ENCODE measurements at regions of chr2 and their contacts with region 1.

Region 1: GRCh38 chr2:134341476-134341875 is 87.6 kb downstream of the MGAT5 start:
- DNase-seq: no peak
- ATAC-seq: no peak
- H3K4me3 ChIP-seq: no peak overlapping the region
- H3K4me3 Mint-ChIP-seq: no peak overlapping the region
- H3K27ac ChIP-seq: peak overlapping the region in 1 of 2 donors; percentile 55
- H3K27ac Mint-ChIP-seq: no peak overlapping the region
- H3K4me1 ChIP-seq: peaks cover 4 to 11% of the 10 kb centered on the region in 2 donors
- H3K4me1 Mint-ChIP-seq: peaks cover 53% of the 10 kb centered on the region
- H3K27me3 ChIP-seq: no peaks in the 10 kb centered on the region
- H3K27me3 Mint-ChIP-seq: no peaks in the 10 kb centered on the region
- CTCF ChIP-seq: no peak

Region 2: DNA sequence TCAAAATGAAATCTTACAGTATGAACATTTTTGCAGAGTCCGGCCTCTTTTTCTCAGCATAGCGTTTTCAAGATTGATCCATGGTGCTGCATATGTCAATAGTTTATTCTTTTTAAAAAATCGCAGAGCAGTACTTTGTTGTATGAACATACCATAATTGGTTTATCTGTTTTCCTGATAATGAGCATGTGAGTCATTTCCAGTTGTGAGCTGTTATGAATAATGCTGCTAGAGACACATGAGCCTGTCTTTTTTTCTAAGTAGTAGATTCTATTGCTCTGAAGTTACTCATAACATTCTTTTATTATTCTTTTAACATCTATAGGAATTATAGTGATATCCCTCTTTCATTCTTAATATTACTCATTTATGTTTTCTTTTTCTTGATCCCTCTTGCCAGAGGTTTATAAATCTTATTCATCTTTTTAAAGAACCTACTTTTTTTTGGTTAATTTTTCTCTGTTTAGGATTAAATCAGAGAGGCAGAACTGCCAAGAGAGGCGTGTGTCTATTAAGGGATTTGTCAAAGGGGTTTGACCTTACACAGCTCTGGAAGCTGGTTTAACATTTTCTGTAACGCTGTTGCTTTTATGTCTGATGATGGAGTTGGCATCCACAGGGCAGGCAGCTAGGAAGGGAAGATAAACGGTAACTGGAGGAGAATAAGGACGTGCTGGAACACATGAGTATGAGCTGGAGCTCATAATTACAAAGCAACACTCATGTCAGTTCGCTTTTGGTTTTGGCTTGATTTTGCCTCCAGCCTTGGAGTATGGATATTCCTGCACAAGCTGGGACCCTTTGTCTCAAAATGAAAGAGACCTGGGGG is 40.2 kb before region 1 on chr2:
- CTCF ChIA-PET with region 1: interaction called, 3 read pairs
- POLR2A ChIA-PET with region 1: no interaction called
- intact Hi-C with region 1: loop called (anchors 5 kb)
- DNase-seq: no peak
- ATAC-seq: no peak
- H3K4me3 ChIP-seq: no peak overlapping the region
- H3K4me3 Mint-ChIP-seq: no peak overlapping the region
- H3K27ac ChIP-seq: peak overlapping the region in 1 of 2 donors; percentile 77
- H3K27ac Mint-ChIP-seq: peak overlapping the region; percentile 65
- H3K4me1 ChIP-seq: peaks cover 60 to 77% of the 10 kb centered on the region in 2 donors
- H3K4me1 Mint-ChIP-seq: peaks cover 77% of the 10 kb centered on the region
- H3K27me3 ChIP-seq: no peaks in the 10 kb centered on the region
- H3K27me3 Mint-ChIP-seq: no peaks in the 10 kb centered on the region
- CTCF ChIP-seq: no peak

Region 3: GRCh38 chr2:134375935-134376334 is 34.5 kb after region 1 on chr2:
- CTCF ChIA-PET with region 1: no interaction called
- POLR2A ChIA-PET with region 1: no interaction called
- intact Hi-C with region 1: loop called (anchors 5 kb)
- DNase-seq: no peak
- ATAC-seq: no peak
- H3K4me3 ChIP-seq: no peak overlapping the region
- H3K4me3 Mint-ChIP-seq: no peak overlapping the region
- H3K27ac ChIP-seq: peak overlapping the region in 1 of 2 donors; percentile 31
- H3K27ac Mint-ChIP-seq: peak overlapping the region; percentile 33
- H3K4me1 ChIP-seq: no peaks in the 10 kb centered on the region
- H3K4me1 Mint-ChIP-seq: no peaks in the 10 kb centered on the region
- H3K27me3 ChIP-seq: no peaks in the 10 kb centered on the region
- H3K27me3 Mint-ChIP-seq: no peaks in the 10 kb centered on the region
- CTCF ChIP-seq: no peak